ENCODE measurements at regions of chr4 and their contacts with region 1.

Region 1: GRCh38 chr4:46844325-46844917 is 64.6 kb downstream of the COX7B2 start:
- DNase-seq: peak; percentile 23
- H3K4me3 ChIP-seq: peak overlapping the region in 1 of 2 experiments; percentile 14; a peak in 1 of 4 replicates
- H3K27ac ChIP-seq: no peak overlapping the region
- H3K4me1 ChIP-seq: no peaks in the 10 kb centered on the region
- H3K27me3 ChIP-seq: peaks cover 17% of the 10 kb centered on the region; the same call in 1 of the 2 replicates
- CTCF ChIP-seq: peak; percentile 84
- EP300 ChIP-seq: no peak
- RAD21 ChIP-seq: peak; percentile 73

Region 2: DNA sequence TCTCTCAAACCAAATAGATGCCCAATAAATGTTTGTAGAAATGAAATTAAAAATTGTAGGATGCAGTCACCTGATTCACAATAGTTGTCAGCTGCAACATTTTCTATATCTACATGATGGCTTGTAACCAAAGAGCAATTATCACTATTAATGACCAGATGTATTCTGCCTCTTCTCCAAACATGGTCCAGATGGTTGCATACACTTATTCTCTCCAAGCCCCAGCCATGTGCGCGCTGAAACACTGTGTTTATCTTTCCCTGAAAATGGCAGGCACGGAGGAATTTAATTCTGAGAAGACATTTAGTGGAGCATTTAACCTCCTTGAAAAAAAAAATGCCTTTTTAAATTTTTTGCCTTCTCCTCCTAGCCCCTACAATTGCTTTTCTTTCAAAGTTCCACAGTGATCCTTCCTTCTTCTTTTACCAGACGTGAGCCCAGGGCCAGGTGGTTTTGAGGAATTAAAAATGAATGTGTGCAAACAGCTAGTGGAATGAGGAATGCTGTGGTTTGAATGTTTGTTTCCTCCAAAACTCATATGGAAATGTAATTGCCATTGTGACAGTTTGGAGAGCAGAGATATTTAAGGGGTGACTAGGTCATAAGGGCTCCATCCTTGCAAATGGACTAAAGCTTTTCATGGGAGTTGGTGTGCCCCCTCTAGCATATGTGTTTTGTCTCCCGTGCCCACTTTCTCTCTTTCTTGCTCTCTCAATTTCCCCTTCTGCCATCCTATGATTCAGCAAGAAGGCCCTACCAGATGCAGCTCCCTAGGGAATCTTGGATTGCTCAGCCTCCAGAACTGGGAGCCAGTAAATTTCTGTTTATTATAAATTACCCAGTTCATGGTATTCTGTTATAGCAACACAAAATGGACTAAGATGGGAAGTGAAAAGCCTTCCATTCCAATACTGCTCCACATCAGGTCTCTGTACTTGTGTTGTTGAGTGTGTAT is 322.9 kb after region 1 on chr4:
- CTCF ChIA-PET with region 1: no interaction called
- POLR2A ChIA-PET with region 1: no interaction called
- DNase-seq: no peak
- H3K4me3 ChIP-seq: no peak overlapping the region
- H3K27ac ChIP-seq: no peak overlapping the region
- H3K4me1 ChIP-seq: no peaks in the 10 kb centered on the region
- H3K27me3 ChIP-seq: 0 out of 2 replicates have a peak, but pooled peaks cover 7% of the 10 kb centered on the region
- CTCF ChIP-seq: no peak
- EP300 ChIP-seq: no peak
- RAD21 ChIP-seq: no peak

Region 3: DNA sequence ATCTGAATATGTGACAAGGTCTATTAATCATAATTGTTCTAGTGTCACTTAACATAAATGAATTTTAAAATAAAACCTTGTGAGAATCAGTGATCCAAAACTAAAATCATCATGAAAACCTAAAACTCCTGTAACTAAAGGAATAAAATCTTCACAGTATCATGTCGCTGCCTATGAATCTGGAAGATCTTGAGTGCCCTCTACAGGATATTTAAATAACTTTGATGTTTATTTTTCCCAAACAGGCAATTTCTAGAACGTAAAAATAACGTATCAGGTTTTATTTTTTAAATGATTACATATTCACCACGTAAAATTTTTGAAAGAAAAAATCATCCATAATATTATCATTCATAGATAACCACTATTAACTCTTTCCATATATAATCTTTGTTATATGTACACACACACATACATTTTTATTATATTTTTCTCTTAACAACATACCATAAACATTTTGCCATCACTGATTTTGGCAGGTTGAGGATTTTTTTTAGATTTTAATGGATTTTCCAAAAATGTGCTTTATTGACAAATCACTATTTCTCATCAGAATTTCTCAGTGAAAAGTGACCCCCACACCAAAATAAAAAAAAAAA is 539.5 kb after region 1 on chr4:
- CTCF ChIA-PET with region 1: interaction called, 26 read pairs
- POLR2A ChIA-PET with region 1: no interaction called
- DNase-seq: peak; percentile 43
- H3K4me3 ChIP-seq: peak overlapping the region in 1 of 2 experiments; percentile 38; a peak in 1 of 4 replicates
- H3K27ac ChIP-seq: no peak overlapping the region
- H3K4me1 ChIP-seq: peaks cover 0 to 8% of the 10 kb centered on the region in 2 experiments; a peak in 2 of 4 replicates
- H3K27me3 ChIP-seq: no peaks in the 10 kb centered on the region
- CTCF ChIP-seq: peak; percentile 77
- EP300 ChIP-seq: no peak
- RAD21 ChIP-seq: peak; percentile 85

Measured in SK-N-SH (cell line).